Activated naive CD4-positive, alpha-beta T cell treated with anti-CD3 and anti-CD28 coated beads, Interleukin-2, amount 10 ng/mL, durations not matched to agents 7 days and 5 days (primary cell): ENCODE measurements at regions of chr2 and their contacts with region 1.

Region 1: DNA sequence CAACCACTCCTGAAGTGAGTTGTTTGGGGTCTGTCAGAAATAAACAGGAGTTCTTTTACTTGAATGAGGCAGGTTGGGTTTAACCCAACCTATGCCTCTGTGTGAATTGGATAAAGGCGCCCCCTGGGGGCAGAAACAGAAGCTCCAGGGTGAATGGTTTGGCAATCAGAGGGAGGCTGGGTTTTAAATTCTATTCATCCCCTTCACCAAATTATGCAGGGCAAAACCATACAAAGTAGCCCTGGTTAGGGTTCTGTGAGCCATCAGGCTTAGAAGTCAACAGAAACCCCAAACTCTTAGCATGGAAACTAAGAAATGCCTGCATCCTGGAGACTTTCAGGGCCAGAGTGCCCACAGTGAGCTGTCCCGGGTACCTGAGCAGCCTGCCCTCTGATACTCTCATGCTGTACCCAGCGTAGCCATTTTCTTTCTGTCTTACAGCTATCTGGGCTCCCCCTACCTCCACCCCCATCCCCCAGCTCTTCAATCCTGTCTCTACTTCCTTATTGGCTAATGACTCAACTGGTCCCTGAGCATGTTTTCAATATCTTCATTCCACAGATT is 241.5 kb downstream of the ICOS start:
- DNase-seq: peak; percentile 79
- H3K4me3 Mint-ChIP-seq: no peak overlapping the region
- H3K27ac Mint-ChIP-seq: no peak overlapping the region
- H3K4me1 Mint-ChIP-seq: peaks cover 3% of the 10 kb centered on the region
- H3K27me3 Mint-ChIP-seq: peaks cover 20% of the 10 kb centered on the region

Region 2: DNA sequence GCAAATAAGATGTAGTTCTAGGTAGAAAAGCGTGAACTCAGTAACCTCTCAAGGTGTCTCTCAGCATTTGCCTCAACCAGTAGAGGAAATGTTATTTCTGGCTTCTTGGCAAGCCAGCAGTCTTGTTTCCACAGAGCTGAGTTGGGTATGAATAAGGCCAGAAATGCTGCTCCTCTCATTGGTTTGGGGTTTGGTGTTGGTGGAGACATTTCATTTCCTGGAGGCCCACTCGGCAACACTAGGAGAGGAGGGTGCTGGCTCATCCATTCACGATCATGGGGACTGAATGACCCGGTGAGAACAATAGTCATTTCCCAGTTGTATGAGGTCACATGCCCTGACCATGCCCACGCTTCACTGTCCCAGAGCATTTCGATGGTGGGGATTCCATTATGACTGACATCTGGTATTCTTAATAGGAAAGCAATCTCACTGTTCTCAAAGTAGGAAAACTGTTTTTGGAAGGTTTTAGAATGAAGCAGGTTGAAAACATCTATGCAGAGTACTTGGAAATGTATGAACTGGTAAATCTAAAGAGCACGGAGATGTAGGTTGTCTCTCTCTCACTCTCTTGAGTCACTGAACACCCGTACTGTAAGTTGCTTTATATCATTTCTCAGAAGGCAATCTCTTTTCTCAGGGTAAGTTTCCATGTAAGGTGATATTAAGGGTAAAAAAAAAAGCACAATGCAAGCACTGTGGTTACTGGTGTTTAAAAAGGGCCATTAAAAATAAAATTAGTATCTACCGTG is 347.6 kb before region 1 on chr2:
- CTCF ChIA-PET with region 1: no interaction called
- DNase-seq: peak; percentile 32
- H3K4me3 Mint-ChIP-seq: no peak overlapping the region
- H3K27ac Mint-ChIP-seq: peak overlapping the region; percentile 87
- H3K4me1 Mint-ChIP-seq: peaks cover 13% of the 10 kb centered on the region
- H3K27me3 Mint-ChIP-seq: peaks cover 5% of the 10 kb centered on the region

Region 3: GRCh38 chr2:203867561-203868200 is 310.4 kb before region 1 on chr2 and contains the start of gene CTLA4:
- CTCF ChIA-PET with region 1: no interaction called
- DNase-seq: peak; percentile 45
- H3K4me3 Mint-ChIP-seq: peak within 1 kb of the TSS; percentile 83
- H3K27ac Mint-ChIP-seq: peak within 1 kb of the TSS; percentile 98
- H3K4me1 Mint-ChIP-seq: peaks cover 67% of the 10 kb centered on the region
- H3K27me3 Mint-ChIP-seq: no peaks in the 10 kb centered on the region

Region 4: DNA sequence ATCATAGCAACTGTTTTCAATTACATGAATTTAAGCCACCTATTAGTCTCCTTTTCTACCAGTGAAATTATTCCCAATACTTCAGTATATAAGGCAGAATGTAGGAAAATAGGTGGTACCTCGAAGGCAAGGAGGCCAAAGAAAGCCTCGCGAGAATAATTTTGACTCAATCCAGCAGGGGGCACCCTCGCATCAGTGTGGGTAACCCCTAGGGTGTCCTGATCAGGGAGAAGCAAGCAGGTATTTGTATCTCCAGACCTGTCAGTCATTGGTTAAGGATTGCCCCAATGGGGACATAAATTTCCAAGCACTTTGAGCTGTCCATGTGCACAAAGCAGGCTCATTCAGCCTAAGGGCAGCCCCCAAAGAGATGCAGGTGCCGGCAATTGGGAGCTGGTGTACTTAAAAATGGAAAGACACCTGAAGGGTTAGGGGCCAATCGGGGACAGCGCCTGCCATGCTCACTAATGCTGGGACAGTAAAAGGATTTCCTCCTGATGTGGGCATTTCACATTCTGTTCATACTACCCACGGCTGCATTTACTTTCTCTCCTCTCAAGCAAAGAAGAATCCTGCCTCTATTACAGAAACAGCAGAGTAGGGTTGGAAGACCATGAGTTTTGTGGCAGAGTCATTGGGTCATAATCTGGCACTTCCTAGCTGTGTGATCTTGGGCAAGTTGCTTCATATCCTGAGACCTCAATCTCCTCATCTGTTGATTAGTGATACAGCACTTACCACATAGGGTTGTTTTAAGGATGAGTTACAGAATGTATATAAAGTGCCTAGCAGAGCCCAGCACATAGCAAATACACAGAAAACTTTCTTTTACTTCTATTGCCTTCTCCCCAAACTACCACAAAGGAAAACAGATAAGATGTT is 105.4 kb before region 1 on chr2:
- CTCF ChIA-PET with region 1: interaction called, 55 read pairs
- DNase-seq: peak; percentile 81
- H3K4me3 Mint-ChIP-seq: no peak overlapping the region
- H3K27ac Mint-ChIP-seq: no peak overlapping the region
- H3K4me1 Mint-ChIP-seq: no peaks in the 10 kb centered on the region
- H3K27me3 Mint-ChIP-seq: peaks cover 5% of the 10 kb centered on the region

Region 5: GRCh38 chr2:204140246-204140645 is 37.8 kb before region 1 on chr2:
- CTCF ChIA-PET with region 1: interaction called, 35 read pairs
- DNase-seq: no peak
- H3K4me3 Mint-ChIP-seq: no peak overlapping the region
- H3K27ac Mint-ChIP-seq: no peak overlapping the region
- H3K4me1 Mint-ChIP-seq: peaks cover 2% of the 10 kb centered on the region
- H3K27me3 Mint-ChIP-seq: peaks cover 38% of the 10 kb centered on the region

Region 6: DNA sequence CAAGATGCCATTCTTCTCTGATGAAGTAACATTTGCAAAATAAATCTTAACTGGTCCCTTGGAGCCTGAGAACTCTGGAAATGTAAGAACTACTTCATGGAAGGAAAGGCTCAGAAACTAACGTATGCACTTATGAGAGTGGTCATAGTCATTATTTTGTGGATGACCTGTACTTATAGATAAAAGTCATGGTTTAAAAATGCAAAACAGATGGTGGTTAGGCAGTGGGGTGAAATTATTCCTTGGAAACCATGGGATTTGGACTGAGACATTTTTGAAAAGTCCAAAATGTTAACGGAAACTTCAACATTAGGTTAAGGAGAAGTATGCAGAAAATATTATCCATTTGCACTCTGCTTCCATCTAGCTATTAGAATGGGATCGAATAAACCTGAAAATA is 18.5 kb before region 1 on chr2:
- CTCF ChIA-PET with region 1: interaction called, 16 read pairs
- DNase-seq: no peak
- H3K4me3 Mint-ChIP-seq: no peak overlapping the region
- H3K27ac Mint-ChIP-seq: no peak overlapping the region
- H3K4me1 Mint-ChIP-seq: no peaks in the 10 kb centered on the region
- H3K27me3 Mint-ChIP-seq: peaks cover 15% of the 10 kb centered on the region

Region 7: GRCh38 chr2:204251158-204251997 is 73.3 kb after region 1 on chr2:
- CTCF ChIA-PET with region 1: no interaction called
- DNase-seq: no peak
- H3K4me3 Mint-ChIP-seq: no peak overlapping the region
- H3K27ac Mint-ChIP-seq: no peak overlapping the region
- H3K4me1 Mint-ChIP-seq: no peaks in the 10 kb centered on the region
- H3K27me3 Mint-ChIP-seq: peaks cover 22% of the 10 kb centered on the region